Activated CD4-positive, alpha-beta T cell treated with anti-CD3 and anti-CD28 coated beads, Interleukin-2, amount 10 ng/mL, durations not matched to agents 24 days and 14 days (primary cell): ENCODE measurements at regions of chr2 and their contacts with region 1.

Region 1: GRCh38 chr2:191382801-191383200 is 137.6 kb downstream of the MYO1B start:
- DNase-seq: no peak
- H3K4me3 Mint-ChIP-seq: no peak overlapping the region
- H3K27ac Mint-ChIP-seq: no peak overlapping the region
- H3K4me1 Mint-ChIP-seq: peaks cover 13% of the 10 kb centered on the region
- H3K27me3 Mint-ChIP-seq: no peaks in the 10 kb centered on the region

Region 2: DNA sequence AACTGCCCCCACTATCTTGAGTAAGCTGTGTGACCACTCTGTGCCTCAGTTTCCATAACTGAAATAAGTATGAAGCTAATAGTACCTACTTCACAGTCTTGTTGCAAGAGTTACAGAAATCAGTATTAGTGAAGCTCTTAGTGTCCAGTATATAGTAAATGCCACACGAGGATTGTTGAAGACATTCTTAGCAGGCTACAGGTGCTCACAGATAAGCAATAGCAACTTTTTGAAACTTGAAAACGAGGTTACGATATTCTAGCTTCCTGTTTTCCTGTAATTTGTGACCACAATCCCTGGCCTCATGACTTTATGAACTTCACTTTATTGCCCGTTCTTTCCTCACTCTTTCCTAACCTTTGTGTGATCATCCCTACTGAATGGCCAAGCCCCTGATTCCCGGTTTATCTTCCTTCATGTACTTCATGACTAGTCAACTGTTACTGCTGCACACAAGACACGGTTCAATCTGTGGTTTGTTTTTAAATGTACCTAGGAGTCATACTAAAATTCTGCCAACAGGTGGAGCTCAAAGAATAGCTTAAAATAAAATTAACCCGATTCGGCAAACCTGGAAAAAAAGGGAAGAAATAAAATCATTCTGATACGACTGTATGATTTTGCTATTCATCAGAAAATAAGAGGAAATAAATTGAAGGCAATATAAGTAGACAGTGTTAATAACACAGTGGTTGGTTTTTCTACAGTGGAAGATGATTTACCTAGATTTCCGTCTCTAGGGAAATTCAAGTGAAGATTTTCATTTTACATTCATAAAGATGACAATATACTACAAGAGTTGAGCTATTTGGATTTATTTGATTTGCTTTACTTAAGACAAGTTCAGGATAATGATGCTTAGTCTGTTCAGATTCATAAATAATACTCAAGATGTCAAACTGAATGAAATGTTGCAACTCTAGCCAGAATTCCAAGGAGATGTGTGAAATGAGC is 330.7 kb before region 1 on chr2:
- intact Hi-C with region 1: loop called (anchors 10 kb)
- DNase-seq: peak; percentile 80
- H3K4me3 Mint-ChIP-seq: no peak overlapping the region
- H3K27ac Mint-ChIP-seq: no peak overlapping the region
- H3K4me1 Mint-ChIP-seq: peaks cover 22% of the 10 kb centered on the region
- H3K27me3 Mint-ChIP-seq: no peaks in the 10 kb centered on the region

Region 3: GRCh38 chr2:191171708-191172355 is 211.0 kb before region 1 on chr2:
- intact Hi-C with region 1: loop called (anchors 5 kb)
- DNase-seq: no peak
- H3K4me3 Mint-ChIP-seq: no peak overlapping the region
- H3K27ac Mint-ChIP-seq: peak overlapping the region; percentile 52
- H3K4me1 Mint-ChIP-seq: peaks cover 69% of the 10 kb centered on the region
- H3K27me3 Mint-ChIP-seq: no peaks in the 10 kb centered on the region

Region 4: DNA sequence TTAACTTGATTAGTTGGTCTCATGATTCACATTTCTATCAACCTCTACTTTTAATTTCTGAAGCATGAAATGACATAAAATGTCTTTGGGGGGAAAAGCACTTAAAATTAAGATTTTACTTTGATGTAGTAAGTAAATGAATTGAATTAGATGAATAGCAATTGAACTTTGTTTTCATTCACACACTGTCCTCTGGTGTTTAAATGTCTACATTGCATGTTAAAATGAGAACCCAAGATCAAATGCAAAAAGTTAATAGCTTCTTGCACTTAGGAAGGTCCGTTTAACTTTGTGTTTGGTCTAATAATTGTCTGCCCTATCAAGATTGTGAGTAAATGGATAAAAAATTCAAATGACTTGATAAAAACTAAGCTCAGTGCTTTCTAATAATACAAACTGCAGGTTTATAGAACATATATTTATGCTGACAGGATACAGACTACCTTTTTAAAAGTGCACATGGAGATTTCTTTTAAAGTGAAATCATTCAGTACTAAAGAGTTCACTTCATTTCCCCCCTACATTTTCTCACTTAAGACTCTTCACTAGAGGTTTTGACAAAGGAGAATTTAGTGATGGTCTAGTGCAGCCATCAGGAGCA is 138.9 kb after region 1 on chr2:
- intact Hi-C with region 1: no loop called
- DNase-seq: no peak
- H3K4me3 Mint-ChIP-seq: no peak overlapping the region
- H3K27ac Mint-ChIP-seq: no peak overlapping the region
- H3K4me1 Mint-ChIP-seq: no peaks in the 10 kb centered on the region
- H3K27me3 Mint-ChIP-seq: peaks cover 16% of the 10 kb centered on the region

Region 5: DNA sequence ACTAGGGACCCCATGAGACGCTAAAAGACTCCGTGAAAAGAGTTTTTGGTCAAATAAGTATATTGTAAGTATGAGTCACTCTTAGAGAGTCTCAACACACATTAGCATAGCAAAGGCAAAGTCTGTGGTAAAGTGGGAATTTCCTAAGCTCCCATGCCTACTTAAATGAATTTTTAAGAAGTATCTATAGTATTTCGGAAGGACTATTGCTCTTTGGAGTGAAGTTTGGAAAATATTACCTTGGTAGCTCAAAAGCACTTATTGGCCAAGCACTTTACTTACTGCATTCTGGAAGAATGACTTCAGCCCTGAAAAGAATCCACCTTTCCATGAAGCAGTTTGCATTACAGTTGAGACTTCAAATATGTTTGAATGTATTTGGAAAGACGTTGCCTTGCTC is 407.0 kb after region 1 on chr2:
- intact Hi-C with region 1: no loop called
- DNase-seq: no peak
- H3K4me3 Mint-ChIP-seq: no peak overlapping the region
- H3K27ac Mint-ChIP-seq: no peak overlapping the region
- H3K4me1 Mint-ChIP-seq: no peaks in the 10 kb centered on the region
- H3K27me3 Mint-ChIP-seq: peaks cover 33% of the 10 kb centered on the region